Stomach (tissue), 19 donors: ENCODE measurements at regions of chr4 and their contacts with region 1.

Region 1: DNA sequence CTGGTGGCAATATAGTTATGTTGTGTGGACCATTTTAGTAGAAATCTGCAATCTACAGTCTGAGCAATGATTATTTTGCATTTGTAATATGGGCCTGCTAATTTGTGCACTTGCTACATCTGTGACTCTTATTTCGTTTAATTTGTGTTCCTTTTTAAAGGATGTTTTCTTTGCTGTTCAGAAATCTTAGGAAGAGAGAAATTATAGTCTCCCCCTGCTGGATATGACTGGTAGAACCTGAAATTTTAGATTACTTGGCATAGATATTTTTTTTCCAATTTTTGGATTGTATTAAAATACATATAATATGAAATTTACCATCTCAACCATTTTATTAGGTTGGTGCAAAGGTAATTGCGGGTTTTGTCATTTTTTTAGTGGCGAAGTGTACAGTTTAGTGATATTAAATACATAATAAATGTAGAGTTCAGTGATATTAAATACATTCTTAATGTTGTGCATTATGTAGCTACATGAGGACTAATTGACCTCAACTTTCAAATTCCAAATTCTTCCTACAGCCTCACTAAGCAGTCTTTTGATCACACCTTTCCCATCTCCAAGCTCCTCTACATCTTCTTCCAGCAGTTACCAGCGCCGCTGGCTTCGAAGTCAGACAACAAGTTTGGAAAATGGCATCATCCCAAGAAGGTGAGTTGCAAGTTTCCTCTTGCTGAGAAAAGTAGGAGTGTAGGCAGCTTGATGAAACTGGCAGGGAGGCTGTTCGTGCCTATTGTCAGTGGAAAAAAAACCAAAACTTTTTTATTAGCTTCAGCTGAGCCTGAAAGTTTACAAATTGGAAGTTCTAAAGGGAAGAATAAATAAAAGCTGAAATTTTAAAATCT is 82.2 kb downstream of the FNIP2 start:
- DNase-seq: peak in 1 of 2 donors; percentile 59
- H3K4me3 ChIP-seq: no peak overlapping the region
- H3K27ac ChIP-seq: peak overlapping the region in 2 of 5 donors; percentile 46 to 48
- H3K4me1 ChIP-seq: peaks cover 0 to 9% (median 7%) of the 10 kb centered on the region in 4 donors
- H3K27me3 ChIP-seq: no peaks in the 10 kb centered on the region
- CTCF ChIP-seq: peak in 5 of 7 experiments; percentile 30 to 76 (median 68)
- EP300 ChIP-seq: no peak
- POLR2A ChIP-seq: no peak

Region 2: DNA sequence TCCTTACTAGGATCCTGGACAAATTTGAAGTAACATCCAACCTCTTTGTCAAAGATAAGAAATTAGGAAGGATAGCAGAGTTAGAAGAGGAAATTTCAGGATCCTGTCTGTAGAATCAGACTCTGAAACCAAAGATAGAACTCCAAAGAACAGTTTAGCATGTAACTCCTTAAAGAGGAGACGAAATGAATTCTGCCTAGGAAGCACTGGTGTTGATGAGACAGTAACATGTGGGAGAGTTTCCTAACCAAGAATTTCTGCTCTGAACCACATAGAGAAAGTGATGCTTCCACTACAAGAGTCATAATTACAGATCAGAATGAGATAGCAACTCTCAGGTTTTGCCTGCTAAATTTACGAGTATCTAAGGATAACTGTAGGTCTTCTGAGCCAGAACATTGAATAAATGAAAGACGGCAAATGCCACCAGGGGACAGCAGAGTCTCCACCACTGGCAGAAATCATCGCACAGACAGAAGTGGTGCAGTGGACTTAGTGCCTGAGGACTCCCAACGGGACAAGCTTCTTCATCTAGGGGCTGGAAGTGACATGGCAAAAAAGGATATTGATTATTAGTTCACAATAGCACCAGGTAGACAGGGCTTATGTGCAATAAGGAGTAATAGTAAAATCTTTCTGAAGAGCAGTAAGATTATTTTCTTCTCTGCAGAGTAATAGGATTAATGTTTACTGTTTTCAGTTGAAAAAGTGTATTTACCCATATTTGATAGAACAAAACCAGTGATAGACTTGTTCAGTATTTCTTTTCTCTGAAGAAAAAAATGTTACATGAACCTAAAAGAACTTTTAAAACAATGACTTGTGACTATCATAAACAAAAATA is 121.1 kb before region 1 on chr4:
- intact Hi-C with region 1: loop called (anchors 5 kb)
- DNase-seq: peak; percentile 68 to 86
- H3K4me3 ChIP-seq: no peak overlapping the region
- H3K27ac ChIP-seq: no peak overlapping the region
- H3K4me1 ChIP-seq: peaks cover 0 to 7% (median 0%) of the 10 kb centered on the region in 4 donors
- H3K27me3 ChIP-seq: no peaks in the 10 kb centered on the region
- CTCF ChIP-seq: peak in 5 of 7 experiments; percentile 65 to 97 (median 80)
- EP300 ChIP-seq: no peak
- POLR2A ChIP-seq: no peak

Region 3: DNA sequence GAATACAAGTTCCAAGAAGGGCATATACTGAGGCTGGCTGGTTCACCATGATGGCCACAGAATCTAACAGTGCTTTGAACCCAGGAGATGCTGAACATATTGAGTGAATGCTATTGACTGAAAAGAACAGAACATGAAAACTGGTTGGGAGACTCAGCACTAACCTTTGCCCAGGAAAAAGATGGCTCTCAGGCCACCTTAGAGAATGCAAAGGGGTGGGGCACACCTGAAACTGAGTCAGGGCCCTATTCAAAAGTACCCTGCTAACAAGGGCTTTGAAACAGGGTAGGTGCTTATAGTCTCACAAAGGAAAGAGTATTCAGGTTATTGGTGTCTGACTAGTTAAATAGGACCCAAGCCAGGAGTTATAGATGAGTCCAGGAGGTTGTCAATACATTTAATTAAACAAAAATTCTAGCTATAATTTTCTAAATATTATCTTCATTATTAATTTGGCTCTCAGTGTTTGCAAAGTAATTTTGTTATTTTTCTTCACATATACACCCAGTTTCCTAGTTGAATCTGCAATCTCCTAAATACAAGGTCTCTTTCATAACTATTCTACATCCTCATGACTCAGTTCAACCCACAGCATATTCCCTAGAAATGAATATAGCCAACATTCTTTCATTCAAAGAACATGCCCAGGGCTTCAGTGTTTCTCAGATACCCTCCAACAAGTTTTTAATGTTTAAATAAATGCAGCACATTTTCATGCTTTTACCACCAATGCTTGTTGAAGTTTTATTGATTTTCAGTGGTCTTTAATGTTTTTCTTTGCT is 107.7 kb after region 1 on chr4:
- intact Hi-C with region 1: no loop called
- DNase-seq: no peak
- H3K4me3 ChIP-seq: no peak overlapping the region
- H3K27ac ChIP-seq: no peak overlapping the region
- H3K4me1 ChIP-seq: no peaks in the 10 kb centered on the region
- H3K27me3 ChIP-seq: no peaks in the 10 kb centered on the region
- CTCF ChIP-seq: no peak
- EP300 ChIP-seq: no peak
- POLR2A ChIP-seq: no peak